Activated T-helper 1 cell treated with anti-CD3 and anti-CD28 coated beads, Interleukin-12 subunit alpha, Interleukin-12 subunit beta, Interleukin-2, Interleukin-4 antibody, amounts not matched to agents 30 ng/mL and 10 ng/mL and 1 ng/mL, durations not matched to agents 14 hours and 24 hours and 36 hours (primary cell): ENCODE measurements at regions of chr2 and their contacts with region 1.

Region 1: GRCh38 chr2:205612636-205613035 is 69.7 kb upstream of the NRP2 start:
- DNase-seq: peak; percentile 21
- H3K4me3 Mint-ChIP-seq: peak overlapping the region; percentile 59
- H3K27ac Mint-ChIP-seq: peak overlapping the region; percentile 92
- H3K4me1 Mint-ChIP-seq: peaks cover 38% of the 10 kb centered on the region
- H3K27me3 Mint-ChIP-seq: peaks cover 12% of the 10 kb centered on the region

Region 2: GRCh38 chr2:204892506-204893255 is 720.0 kb before region 1 on chr2:
- intact Hi-C with region 1: loop called (anchors 5 kb)
- DNase-seq: no peak
- H3K4me3 Mint-ChIP-seq: no peak overlapping the region
- H3K27ac Mint-ChIP-seq: no peak overlapping the region
- H3K4me1 Mint-ChIP-seq: peaks cover 15% of the 10 kb centered on the region
- H3K27me3 Mint-ChIP-seq: no peaks in the 10 kb centered on the region

Region 3: GRCh38 chr2:204972606-204973336 is 639.9 kb before region 1 on chr2:
- intact Hi-C with region 1: loop called (anchors 1 kb)
- DNase-seq: no peak
- H3K4me3 Mint-ChIP-seq: no peak overlapping the region
- H3K27ac Mint-ChIP-seq: peak overlapping the region; percentile 49
- H3K4me1 Mint-ChIP-seq: peaks cover 38% of the 10 kb centered on the region
- H3K27me3 Mint-ChIP-seq: no peaks in the 10 kb centered on the region

Region 4: DNA sequence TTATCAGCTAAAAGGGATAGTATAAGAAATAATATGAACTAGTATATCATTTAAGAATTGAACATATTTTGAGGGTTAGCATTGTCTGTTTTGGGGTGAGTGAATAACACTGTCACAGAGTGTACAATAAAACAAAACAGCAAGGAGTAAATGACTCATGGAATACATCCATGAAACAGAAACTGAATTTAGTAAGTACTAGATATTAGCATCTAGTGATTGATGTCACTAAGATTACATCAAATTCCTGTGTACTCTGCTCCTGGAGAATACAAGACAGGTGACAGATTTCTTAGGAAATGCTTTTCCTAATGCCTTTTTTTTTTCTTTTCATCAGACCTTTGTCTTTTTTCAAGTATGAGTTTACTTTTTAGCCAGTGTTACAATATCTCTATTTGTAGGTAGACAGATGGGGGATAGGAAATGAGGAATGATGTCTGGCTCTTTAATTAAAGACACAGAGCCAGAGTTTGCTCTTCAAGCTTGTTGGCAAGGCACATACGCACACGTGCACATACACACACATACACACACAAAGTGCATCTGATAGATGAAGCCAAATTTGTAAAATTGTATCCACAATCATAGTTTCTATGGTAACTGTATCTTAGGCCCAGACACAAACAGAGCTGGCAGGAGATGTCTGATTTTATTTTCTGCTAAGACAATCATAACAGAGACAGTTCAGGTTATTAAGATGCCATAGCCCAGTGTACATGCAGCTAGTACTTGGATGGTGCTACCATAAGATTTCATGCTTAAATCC is 68.5 kb before region 1 on chr2:
- intact Hi-C with region 1: loop called (anchors 2 kb)
- DNase-seq: no peak
- H3K4me3 Mint-ChIP-seq: no peak overlapping the region
- H3K27ac Mint-ChIP-seq: peak overlapping the region; percentile 44
- H3K4me1 Mint-ChIP-seq: peaks cover 21% of the 10 kb centered on the region
- H3K27me3 Mint-ChIP-seq: peaks cover 3% of the 10 kb centered on the region

Region 5: DNA sequence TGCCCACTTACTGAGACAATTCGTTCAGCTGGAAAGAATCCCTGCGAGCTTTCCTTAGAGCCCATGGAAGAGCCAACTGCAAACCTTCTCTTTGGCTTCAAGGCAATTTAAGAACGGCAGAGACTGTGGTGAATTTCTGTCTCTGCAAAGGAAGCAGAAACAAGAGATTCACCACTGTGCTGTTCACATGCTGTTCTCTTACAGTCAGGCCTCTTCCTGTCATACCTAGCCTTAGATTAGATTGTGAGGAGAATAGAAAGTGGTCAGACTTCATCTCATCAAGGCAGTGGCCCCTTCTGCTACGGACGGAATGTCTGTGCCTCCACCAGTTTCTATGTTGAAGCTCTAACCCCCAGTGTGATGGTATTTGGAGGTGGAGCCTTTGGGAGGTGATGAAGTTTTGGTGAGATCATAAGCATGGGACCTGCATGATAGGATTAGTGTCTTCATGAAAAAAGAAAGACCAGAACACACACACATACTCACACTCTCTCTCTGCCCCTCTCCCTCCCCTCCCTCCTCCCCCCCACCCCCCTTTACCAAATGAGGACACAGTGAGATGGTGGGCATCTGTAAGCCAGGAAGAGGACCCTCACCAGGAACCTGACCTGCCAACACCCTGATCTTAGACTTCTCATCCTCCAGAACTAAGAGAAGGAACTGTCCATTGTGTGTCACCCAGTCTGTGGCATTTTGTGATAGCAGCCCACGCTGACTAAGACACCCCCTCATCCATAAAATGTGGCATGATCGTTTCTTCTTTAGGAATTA is 24.1 kb after region 1 on chr2:
- intact Hi-C with region 1: loop called (anchors 1 kb)
- DNase-seq: no peak
- H3K4me3 Mint-ChIP-seq: no peak overlapping the region
- H3K27ac Mint-ChIP-seq: peak overlapping the region; percentile 42
- H3K4me1 Mint-ChIP-seq: peaks cover 17% of the 10 kb centered on the region
- H3K27me3 Mint-ChIP-seq: no peaks in the 10 kb centered on the region

Region 6: DNA sequence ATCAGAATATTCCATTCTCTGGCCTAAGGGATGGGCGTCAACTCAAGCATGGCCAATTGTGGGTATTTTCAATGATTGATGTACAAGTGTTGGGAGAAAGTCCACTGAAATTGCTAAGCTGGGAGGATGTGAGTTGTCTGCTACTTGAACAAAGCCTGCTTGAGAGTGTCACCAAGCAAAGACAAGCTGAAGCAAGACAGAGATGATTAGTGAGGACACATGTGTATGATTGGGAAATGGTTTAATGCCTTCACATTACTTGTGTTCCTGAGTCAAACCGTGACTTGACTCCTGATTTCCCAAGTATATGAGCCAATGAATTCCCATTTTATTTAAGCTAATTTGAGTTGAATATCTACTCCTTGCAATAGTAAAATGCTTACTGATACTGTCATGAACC is 45.9 kb after region 1 on chr2:
- intact Hi-C with region 1: loop called (anchors 1 kb)
- DNase-seq: no peak
- H3K4me3 Mint-ChIP-seq: no peak overlapping the region
- H3K27ac Mint-ChIP-seq: no peak overlapping the region
- H3K4me1 Mint-ChIP-seq: peaks cover 32% of the 10 kb centered on the region
- H3K27me3 Mint-ChIP-seq: peaks cover 5% of the 10 kb centered on the region

Region 7: DNA sequence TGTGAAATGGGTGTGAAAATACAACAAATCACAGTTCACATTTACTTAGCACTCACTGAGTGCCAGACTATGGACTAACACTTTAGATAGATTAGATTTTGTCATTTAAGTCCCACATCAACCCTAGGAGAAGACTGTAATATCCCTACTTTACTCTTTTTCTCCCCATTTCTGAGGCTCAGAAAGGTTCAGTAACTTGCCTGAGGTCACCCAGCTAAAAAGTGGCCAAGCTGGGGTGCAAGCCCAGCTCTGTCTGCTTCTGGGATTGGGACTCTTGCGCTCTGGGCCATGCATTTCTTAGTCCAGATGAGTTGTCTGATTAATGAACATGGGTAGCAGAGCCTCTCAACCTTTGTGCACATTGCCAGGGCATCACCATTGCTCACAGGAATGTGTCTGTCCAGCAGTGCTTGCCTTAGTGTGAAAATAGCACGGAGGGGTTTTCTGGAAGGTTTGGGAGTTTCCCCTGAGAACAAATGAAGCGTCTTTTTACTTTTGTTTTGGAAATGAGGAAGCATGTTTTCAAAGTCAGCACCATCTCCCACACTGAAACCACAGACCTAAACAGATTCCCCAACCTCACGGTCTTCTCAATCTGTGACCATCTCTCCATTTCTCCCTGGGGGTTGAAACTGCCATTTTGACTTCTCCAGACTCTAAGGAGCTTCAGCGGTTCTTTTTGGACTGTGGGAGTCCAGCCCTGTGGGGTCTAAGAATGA is 101.6 kb after region 1 on chr2:
- intact Hi-C with region 1: loop called (anchors 1 kb)
- DNase-seq: no peak
- H3K4me3 Mint-ChIP-seq: peak overlapping the region; percentile 5
- H3K27ac Mint-ChIP-seq: peak overlapping the region; percentile 25
- H3K4me1 Mint-ChIP-seq: peaks cover 78% of the 10 kb centered on the region
- H3K27me3 Mint-ChIP-seq: no peaks in the 10 kb centered on the region